K562 (cell line): ENCODE measurements at regions of chr2 and their contacts with region 1.

Region 1: DNA sequence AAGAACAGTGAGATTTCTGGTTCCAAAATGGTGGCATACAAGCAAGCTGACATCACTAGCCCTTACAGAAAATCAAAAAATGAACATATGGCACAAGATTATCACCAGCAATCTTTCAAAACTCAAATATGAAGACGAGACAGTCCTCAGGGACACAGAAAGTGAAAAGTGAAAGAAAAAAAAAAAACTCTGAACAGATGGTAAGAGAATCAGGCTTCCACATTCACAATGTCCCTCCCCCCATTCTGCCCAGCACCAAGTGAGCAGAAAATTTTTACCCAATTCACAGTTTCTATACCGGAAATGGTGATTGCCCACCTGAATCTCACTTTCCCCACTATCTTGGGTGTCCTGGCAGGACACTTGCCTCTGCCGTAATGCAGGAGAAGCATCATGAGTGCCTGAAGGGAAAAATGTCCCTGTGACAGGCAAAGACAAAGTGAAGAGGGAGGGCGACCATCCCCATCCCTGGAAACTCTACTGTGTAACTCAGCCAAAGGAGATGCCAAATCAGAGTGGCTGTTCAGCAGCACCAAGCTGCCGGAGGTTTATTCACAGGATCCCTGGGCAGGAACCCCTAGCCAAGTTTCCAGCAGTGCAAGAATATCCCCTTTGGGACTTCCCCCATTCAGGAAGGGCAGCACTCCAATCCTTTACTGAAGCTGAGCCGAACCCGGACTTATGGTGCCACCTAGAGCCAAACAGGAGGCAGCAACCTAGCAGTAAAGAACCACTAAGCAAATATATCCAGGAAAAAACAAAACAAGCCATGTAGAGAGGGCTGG is 312.2 kb downstream of the LRATD1 start:
- DNase-seq: peak in 2 of 4 experiments; percentile 19 to 46
- ATAC-seq: peak; percentile 87
- H3K4me3 ChIP-seq: no peak overlapping the region
- H3K27ac ChIP-seq: no peak overlapping the region
- H3K4me1 ChIP-seq: no peaks in the 10 kb centered on the region
- H3K27me3 ChIP-seq: no peaks in the 10 kb centered on the region
- CTCF ChIP-seq: peak; percentile 52 to 59 (median 53); a peak in 5 of 6 replicates
- EP300 ChIP-seq: no peak
- POLR2A ChIP-seq: no peak
- RAD21 ChIP-seq: peak; percentile 7 to 60; a peak in 2 of 4 replicates

Region 2: DNA sequence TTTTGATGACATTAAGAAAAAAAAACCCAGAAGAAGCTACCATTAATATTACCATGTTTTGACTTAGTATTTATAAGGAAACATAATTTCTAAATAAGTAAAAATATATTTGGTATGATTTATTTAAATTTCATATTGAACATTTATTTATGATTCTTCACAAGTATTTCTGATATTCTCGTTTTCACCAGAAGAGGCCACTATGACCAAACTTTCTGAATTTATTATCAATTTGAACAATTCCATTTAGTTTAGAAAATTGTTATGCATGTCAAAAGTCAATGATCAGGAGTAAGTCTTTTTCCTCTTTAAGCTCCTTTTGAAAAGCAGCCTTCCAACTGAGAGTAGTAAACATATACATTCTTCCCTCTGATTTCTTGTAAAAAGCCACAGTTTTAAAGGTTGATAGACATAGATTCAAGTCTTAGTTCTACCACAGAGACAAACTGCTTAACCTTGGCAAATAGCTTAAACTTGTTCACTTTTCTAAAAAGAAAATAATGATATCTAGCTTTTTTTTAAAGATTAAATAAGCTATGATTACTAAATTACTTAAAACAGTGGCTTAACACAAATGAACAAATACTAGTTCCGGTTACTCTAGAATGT is 1898.1 kb before region 1 on chr2:
- CTCF ChIA-PET with region 1: no interaction called
- POLR2A ChIA-PET with region 1: no interaction called
- in situ Hi-C with region 1: no loop called
- intact Hi-C with region 1: loop called (anchors 10 kb)
- DNase-seq: peak in 1 of 4 experiments; percentile 11
- ATAC-seq: no peak
- H3K4me3 ChIP-seq: no peak overlapping the region
- H3K27ac ChIP-seq: no peak overlapping the region
- H3K4me1 ChIP-seq: no peaks in the 10 kb centered on the region; a peak in 2 of 5 replicates
- H3K27me3 ChIP-seq: no peaks in the 10 kb centered on the region
- CTCF ChIP-seq: peak in 1 of 3 experiments; percentile 59; a peak in 2 of 6 replicates
- EP300 ChIP-seq: no peak
- POLR2A ChIP-seq: no peak
- RAD21 ChIP-seq: peak; percentile 45 to 68; a peak in 3 of 4 replicates

Region 3: GRCh38 chr2:13390676-13391075 is 1554.1 kb before region 1 on chr2:
- CTCF ChIA-PET with region 1: no interaction called
- POLR2A ChIA-PET with region 1: no interaction called
- in situ Hi-C with region 1: no loop called
- intact Hi-C with region 1: no loop called
- DNase-seq: no peak
- ATAC-seq: no peak
- H3K4me3 ChIP-seq: no peak overlapping the region
- H3K27ac ChIP-seq: no peak overlapping the region
- H3K4me1 ChIP-seq: no peaks in the 10 kb centered on the region
- H3K27me3 ChIP-seq: no peaks in the 10 kb centered on the region
- CTCF ChIP-seq: no peak
- EP300 ChIP-seq: no peak
- POLR2A ChIP-seq: no peak
- RAD21 ChIP-seq: no peak

Region 4: GRCh38 chr2:15145046-15145817 is 200.5 kb after region 1 on chr2:
- CTCF ChIA-PET with region 1: no interaction called
- POLR2A ChIA-PET with region 1: no interaction called
- in situ Hi-C with region 1: no loop called
- intact Hi-C with region 1: no loop called
- DNase-seq: no peak
- ATAC-seq: no peak
- H3K4me3 ChIP-seq: no peak overlapping the region
- H3K27ac ChIP-seq: no peak overlapping the region
- H3K4me1 ChIP-seq: no peaks in the 10 kb centered on the region; a peak in 1 of 5 replicates
- H3K27me3 ChIP-seq: peaks cover 0 to 27% of the 10 kb centered on the region in 2 experiments; a peak in 2 of 5 replicates
- CTCF ChIP-seq: no peak
- EP300 ChIP-seq: no peak
- POLR2A ChIP-seq: no peak
- RAD21 ChIP-seq: no peak